ENCODE measurements at regions of chr14 and their contacts with region 1.

Region 1: DNA sequence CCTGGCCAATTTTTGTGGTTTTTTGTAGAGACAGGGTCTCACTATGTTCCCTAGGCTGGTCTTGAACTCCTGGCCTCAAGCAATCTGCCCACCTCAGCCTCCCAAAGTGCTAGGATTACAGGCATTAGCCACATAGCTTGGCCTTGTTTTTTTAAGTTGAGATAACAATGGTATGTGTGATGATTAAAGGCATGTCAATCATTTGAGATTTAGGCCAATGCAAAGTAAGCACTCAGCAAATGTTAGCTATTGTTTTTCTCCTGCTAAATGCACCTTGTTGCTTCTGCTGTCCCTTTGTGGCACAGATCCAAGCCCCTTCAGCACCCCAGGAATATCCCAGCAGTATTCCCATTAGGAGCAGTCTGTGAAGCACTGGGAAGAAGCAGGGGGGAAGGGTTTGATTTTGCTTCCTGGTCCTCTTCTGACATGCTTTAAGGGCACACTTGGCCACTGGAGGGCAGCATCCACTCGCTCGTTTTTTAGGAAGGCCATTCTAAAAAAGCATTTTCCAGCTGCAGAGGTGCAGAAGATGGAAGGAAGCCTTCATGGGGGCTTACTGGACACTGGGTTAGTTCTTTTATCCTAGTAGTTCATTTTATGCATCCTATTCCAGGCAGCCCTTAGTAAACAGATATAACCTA is 70.2 kb upstream of the ZFP36L1 start:
- DNase-seq: peak; percentile 92
- H3K4me3 Mint-ChIP-seq: no peak overlapping the region
- H3K27ac Mint-ChIP-seq: no peak overlapping the region
- H3K4me1 Mint-ChIP-seq: no peaks in the 10 kb centered on the region
- H3K27me3 Mint-ChIP-seq: no peaks in the 10 kb centered on the region

Region 2: DNA sequence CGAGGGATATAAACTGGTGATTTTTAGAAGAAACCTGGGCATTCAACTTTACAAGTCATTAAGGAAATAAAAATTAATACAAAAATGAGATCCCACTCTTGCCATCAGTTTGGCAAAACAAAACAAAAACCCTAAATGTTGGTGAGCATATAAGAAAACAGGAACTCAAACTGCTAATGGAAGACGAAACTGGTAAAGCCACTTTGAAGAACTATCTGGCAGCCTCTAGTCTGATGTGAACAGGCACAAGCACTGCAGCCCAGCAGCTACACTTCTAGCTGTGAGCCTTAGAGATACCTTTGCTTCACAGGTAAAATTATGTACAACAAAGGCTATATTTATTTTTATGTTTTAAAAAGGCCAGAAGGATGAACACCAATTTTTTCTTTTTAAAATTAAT is 529.8 kb before region 1 on chr14:
- CTCF ChIA-PET with region 1: no interaction called
- intact Hi-C with region 1: no loop called
- DNase-seq: no peak
- H3K4me3 Mint-ChIP-seq: no peak overlapping the region
- H3K27ac Mint-ChIP-seq: no peak overlapping the region
- H3K4me1 Mint-ChIP-seq: peaks cover 9% of the 10 kb centered on the region
- H3K27me3 Mint-ChIP-seq: no peaks in the 10 kb centered on the region

Region 3: DNA sequence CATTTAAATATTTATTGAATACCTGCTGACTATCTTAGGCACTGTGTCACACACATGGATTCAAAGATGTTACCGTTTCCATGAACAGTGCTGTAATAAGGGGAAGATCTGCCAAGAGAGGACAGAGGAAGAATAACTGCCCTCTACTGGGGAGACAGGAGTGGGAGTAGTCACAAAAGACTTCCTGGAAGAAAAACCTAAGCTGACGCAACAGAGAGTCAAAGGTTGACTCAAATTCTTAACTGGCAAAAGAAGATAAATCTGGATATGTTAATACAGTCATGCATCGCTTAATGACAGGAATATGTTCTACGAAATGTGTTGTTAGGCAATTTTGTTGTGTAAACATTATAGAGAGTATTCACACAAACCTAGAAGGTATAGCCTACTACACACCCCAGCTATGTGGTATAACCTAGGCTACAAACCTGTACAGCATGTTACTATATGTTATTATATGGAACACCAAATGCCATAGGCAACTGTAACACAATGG is 238.3 kb after region 1 on chr14:
- CTCF ChIA-PET with region 1: interaction called, 6 read pairs
- intact Hi-C with region 1: loop called (anchors 2 kb)
- DNase-seq: peak; percentile 47
- H3K4me3 Mint-ChIP-seq: no peak overlapping the region
- H3K27ac Mint-ChIP-seq: peak overlapping the region; percentile 61
- H3K4me1 Mint-ChIP-seq: peaks cover 26% of the 10 kb centered on the region
- H3K27me3 Mint-ChIP-seq: no peaks in the 10 kb centered on the region

Region 4: GRCh38 chr14:69107407-69108003 is 244.4 kb after region 1 on chr14:
- CTCF ChIA-PET with region 1: interaction called, 22 read pairs
- intact Hi-C with region 1: loop called (anchors 1 kb)
- DNase-seq: peak; percentile 48
- H3K4me3 Mint-ChIP-seq: no peak overlapping the region
- H3K27ac Mint-ChIP-seq: no peak overlapping the region
- H3K4me1 Mint-ChIP-seq: peaks cover under 1% of the 10 kb centered on the region
- H3K27me3 Mint-ChIP-seq: no peaks in the 10 kb centered on the region